CD4-positive, alpha-beta memory T cell (primary cell): ENCODE measurements at regions of chr6 and their contacts with region 1.

Region 1: DNA sequence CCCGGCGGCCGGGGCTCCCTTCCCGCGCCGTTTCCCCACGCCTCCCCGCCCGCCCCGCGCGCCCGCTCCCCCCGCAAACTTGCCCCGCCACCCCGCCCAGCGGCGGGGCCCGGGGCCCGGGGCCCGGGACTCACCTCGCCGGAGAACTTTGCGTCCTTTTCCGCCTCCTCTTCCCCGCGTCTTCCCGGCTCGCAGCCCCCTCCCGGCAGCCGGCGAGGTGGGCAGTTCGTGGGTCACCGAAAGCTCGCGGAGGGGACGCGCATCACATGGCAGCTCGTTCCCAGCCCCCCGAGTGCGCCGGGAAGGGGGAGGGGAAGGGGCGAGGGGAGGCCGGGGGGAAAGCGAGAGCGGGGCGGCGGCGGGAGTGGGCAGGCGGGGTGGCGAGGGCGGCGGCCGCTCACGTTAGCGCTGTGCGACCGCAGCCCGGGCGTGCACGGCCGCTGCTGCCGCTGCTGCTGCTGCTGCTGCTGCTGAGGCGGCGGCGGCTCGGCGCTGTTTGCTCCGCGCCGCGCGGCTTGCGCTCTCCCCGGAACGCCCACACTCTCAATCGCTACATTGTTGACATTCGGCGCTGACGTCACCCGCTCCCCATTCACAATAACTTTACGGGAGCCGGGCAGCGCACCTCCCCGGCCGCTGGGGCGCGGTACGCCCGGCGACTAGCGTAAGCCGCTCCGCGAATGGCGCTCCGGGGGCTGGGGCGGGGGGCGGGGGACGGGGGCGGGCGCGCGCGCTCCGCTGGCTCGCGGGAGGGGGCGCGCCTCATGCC is at the start of gene BACH2:
- DNase-seq: peak; percentile 90 to 96 (median 92)
- H3K4me3 ChIP-seq: peak within 1 kb of the TSS; percentile 43 to 81
- H3K4me3 Mint-ChIP-seq: peak within 1 kb of the TSS; percentile 90 to 96 (median 93)
- H3K27ac ChIP-seq: peak within 1 kb of the TSS; percentile 65
- H3K27ac Mint-ChIP-seq: peak within 1 kb of the TSS; percentile 92 to 99 (median 97)
- H3K4me1 ChIP-seq: peaks cover 40% of the 10 kb centered on the region
- H3K4me1 Mint-ChIP-seq: peaks cover 14 to 40% (median 24%) of the 10 kb centered on the region in 4 donors
- H3K27me3 ChIP-seq: no peaks in the 10 kb centered on the region
- H3K27me3 Mint-ChIP-seq: peaks cover 0 to 4% of the 10 kb centered on the region in 2 donors
- total RNA-seq, gene BACH2: 44.4 to 48.0 TPM

Region 2: DNA sequence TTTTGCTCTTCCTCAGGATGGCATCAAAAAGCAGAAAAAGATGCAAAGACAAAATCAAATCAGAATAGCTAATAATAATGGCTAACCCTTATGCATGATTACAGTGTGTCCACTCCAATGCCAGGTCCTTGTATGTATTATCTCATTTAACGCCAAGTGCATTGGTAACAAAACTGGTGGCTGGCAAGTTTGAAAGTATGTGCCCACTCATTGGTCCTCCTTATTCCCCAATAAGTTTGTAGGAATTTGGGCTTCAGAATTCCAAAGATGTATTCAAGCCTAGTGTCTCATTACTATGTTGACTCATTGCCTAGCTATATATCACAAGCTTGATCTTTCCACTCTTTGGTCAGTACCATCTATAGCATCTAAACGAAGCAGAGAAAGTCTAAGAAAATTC is 205.7 kb before region 1 on chr6:
- CTCF ChIA-PET with region 1: no interaction called
- POLR2A ChIA-PET with region 1: no interaction called
- intact Hi-C with region 1: no loop called
- DNase-seq: no peak
- H3K4me3 ChIP-seq: no peak overlapping the region
- H3K4me3 Mint-ChIP-seq: no peak overlapping the region
- H3K27ac ChIP-seq: no peak overlapping the region
- H3K27ac Mint-ChIP-seq: no peak overlapping the region
- H3K4me1 ChIP-seq: peaks cover 11% of the 10 kb centered on the region
- H3K4me1 Mint-ChIP-seq: peaks cover 12 to 38% (median 21%) of the 10 kb centered on the region in 4 donors
- H3K27me3 ChIP-seq: no peaks in the 10 kb centered on the region
- H3K27me3 Mint-ChIP-seq: no peaks in the 10 kb centered on the region

Region 3: DNA sequence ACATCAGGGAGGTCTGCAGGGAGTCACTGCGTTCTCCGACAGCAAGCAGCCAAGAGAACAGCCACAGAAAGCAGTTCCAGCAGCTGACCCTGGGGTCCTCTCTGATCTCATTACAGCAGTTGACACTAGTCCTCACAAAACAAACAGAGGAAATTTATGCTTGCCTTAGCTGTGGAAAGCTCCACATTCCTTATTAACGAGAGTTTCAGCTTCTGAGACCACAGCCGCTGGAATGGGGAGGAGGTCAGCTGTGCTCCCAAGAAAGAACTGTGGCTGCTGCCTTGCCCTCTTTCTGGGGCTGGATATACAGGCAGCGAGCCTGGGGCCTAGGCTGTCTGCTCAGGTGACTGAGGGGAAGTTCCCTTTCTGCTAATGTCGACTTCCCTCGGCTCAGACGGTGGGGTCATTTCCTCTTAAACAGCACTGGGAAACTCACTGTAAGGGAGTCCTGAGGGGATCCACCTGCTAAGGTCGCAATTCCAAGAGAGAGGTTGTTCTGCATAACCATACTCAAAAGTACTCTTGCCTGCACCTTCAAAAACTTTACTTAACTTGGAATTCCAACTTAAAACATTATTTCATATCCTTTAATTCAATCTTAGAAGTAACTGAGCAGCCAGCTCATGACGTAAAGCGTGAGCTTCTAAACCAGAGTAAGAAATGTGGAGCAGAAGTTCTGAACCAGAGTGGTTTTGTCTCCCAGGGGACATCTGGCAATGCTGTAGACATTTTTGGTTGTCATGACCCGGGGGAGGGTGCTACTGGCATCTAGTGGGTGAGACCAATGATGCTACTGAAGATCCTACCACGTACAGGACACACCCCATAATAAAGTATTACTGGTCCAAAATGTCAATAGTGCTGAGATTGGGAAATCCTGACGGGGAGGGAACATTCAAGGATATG is 80.2 kb before region 1 on chr6:
- CTCF ChIA-PET with region 1: interaction called, 4 read pairs
- POLR2A ChIA-PET with region 1: interaction called, 4 read pairs
- intact Hi-C with region 1: loop called (anchors 1 kb)
- DNase-seq: peak in 4 of 5 donors; percentile 11 to 73 (median 31)
- H3K4me3 ChIP-seq: no peak overlapping the region
- H3K4me3 Mint-ChIP-seq: peak overlapping the region in 5 of 8 donors; percentile 6 to 61 (median 35)
- H3K27ac ChIP-seq: peak overlapping the region; percentile 43
- H3K27ac Mint-ChIP-seq: peak overlapping the region in 3 of 7 donors; percentile 84 to 89 (median 86)
- H3K4me1 ChIP-seq: peaks cover 59% of the 10 kb centered on the region
- H3K4me1 Mint-ChIP-seq: peaks cover 27 to 30% (median 28%) of the 10 kb centered on the region in 4 donors
- H3K27me3 ChIP-seq: no peaks in the 10 kb centered on the region
- H3K27me3 Mint-ChIP-seq: no peaks in the 10 kb centered on the region

Region 4: GRCh38 chr6:90285611-90286381 is 10.7 kb before region 1 on chr6:
- CTCF ChIA-PET with region 1: interaction called, 16 read pairs
- POLR2A ChIA-PET with region 1: interaction called, 79 read pairs
- intact Hi-C with region 1: loop called (anchors 1 kb)
- DNase-seq: peak; percentile 68 to 83 (median 76)
- H3K4me3 ChIP-seq: peak overlapping the region; percentile 1 to 58
- H3K4me3 Mint-ChIP-seq: peak overlapping the region; percentile 80 to 95 (median 86)
- H3K27ac ChIP-seq: peak overlapping the region; percentile 46
- H3K27ac Mint-ChIP-seq: peak overlapping the region; percentile 77 to 98 (median 89)
- H3K4me1 ChIP-seq: peaks cover 32% of the 10 kb centered on the region
- H3K4me1 Mint-ChIP-seq: peaks cover 47 to 89% (median 68%) of the 10 kb centered on the region in 4 donors
- H3K27me3 ChIP-seq: no peaks in the 10 kb centered on the region
- H3K27me3 Mint-ChIP-seq: peaks cover 0 to 2% of the 10 kb centered on the region in 2 donors

Region 5: DNA sequence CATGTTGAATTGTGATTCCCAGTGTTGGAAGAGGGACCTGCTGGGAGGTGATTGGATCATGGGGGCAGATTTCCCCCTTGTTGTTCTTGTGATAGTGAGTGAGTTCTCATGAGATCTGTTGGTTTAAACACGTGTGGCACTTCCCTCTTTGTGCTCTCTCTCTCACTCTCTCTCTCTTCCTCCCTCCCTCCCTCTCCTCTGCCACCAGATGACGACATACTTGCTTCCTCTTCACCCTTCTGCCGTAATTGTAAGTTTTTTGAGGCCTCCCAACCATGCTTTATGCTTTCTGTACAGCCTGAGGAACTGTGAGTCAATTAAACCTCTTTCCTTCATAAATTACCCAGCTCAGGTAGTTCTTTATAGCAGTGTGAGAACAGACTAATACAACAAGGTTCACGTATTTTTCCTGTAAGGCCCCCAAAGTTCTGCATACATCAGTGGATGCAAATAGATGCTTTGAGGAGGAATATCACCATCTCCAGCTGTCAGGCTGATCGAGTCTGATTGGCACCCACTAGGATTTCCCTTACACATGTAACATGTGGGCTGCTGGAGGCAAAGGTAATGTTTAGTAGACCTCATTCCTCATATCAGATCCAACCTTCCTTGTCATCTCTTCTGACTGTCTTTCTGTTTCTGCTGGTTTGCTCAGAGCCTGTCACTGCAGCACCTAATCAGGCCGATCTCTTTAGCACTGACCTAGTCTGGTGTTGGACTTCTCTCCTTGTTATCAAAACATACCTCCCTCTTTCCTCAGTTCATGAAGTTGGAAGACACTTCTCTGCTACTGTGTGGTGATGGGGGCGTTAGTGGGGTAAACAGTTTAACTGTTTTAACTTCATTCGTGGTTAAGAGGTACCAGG is 54.4 kb after region 1 on chr6:
- CTCF ChIA-PET with region 1: no interaction called
- POLR2A ChIA-PET with region 1: no interaction called
- intact Hi-C with region 1: loop called (anchors 5 kb)
- DNase-seq: peak; percentile 61 to 79 (median 72)
- H3K4me3 ChIP-seq: no peak overlapping the region
- H3K4me3 Mint-ChIP-seq: peak overlapping the region in 5 of 8 donors; percentile 8 to 41 (median 38)
- H3K27ac ChIP-seq: no peak overlapping the region
- H3K27ac Mint-ChIP-seq: peak overlapping the region; percentile 37 to 93 (median 81)
- H3K4me1 ChIP-seq: peaks cover 10% of the 10 kb centered on the region
- H3K4me1 Mint-ChIP-seq: peaks cover 7 to 20% (median 15%) of the 10 kb centered on the region in 4 donors
- H3K27me3 ChIP-seq: no peaks in the 10 kb centered on the region
- H3K27me3 Mint-ChIP-seq: peaks cover 9% of the 10 kb centered on the region in 2 donors

Region 6: GRCh38 chr6:90472744-90473143 is 176.2 kb after region 1 on chr6:
- CTCF ChIA-PET with region 1: interaction called, 20 read pairs
- POLR2A ChIA-PET with region 1: interaction called, 15 read pairs
- intact Hi-C with region 1: no loop called
- DNase-seq: peak in 4 of 5 donors; percentile 25 to 44 (median 36)
- H3K4me3 ChIP-seq: no peak overlapping the region
- H3K4me3 Mint-ChIP-seq: peak overlapping the region; percentile 63 to 87 (median 78)
- H3K27ac ChIP-seq: no peak overlapping the region
- H3K27ac Mint-ChIP-seq: peak overlapping the region in 6 of 7 donors; percentile 11 to 79 (median 76)
- H3K4me1 ChIP-seq: peaks cover 43% of the 10 kb centered on the region
- H3K4me1 Mint-ChIP-seq: peaks cover 28 to 66% (median 36%) of the 10 kb centered on the region in 4 donors
- H3K27me3 ChIP-seq: no peaks in the 10 kb centered on the region
- H3K27me3 Mint-ChIP-seq: no peaks in the 10 kb centered on the region

Region 7: DNA sequence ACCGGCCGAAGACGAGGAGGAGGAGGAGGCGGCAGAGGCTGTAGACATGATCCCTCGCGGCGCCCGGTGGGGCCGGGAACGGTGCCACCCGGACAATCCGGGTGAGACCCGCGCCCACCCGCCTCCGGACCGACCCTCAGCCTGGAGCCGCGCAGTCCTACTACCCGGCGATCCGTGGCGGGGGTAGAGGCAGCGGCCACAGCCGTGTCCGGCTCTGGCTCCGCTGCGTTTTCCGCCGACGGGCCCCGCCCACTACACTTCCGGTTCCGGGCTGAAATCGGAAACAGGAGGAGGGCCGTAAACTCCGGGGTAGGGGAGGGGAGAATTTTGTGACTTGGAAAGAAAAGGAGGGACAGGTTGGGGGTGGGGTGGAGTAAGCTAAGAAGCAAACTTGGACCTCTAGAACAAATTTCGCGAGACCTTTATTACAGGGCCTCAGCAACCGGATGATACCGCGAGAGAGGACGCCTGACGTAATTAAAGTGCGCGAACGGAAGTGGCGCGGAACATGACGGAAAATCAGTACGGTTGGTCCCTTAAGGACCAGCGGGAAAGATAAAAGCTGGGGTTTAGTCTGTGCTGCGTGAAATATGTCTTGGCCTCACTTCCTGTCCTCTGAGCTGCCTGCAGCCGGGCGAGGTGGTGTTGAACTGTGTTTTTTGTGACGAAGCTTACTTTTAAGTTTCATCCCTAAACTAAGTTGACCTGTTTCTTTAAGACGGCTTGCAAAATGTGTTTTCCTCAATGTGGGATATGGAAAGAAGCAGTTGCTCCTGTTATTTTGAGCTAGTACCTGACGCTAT is 290.5 kb after region 1 on chr6 and contains the start of gene MAP3K7:
- CTCF ChIA-PET with region 1: no interaction called
- POLR2A ChIA-PET with region 1: interaction called, 3 read pairs
- intact Hi-C with region 1: loop called (anchors 5 kb)
- DNase-seq: peak; percentile 93 to 94 (median 94)
- H3K4me3 ChIP-seq: peak within 1 kb of the TSS; percentile 80 to 82
- H3K4me3 Mint-ChIP-seq: peak within 1 kb of the TSS; percentile 95 to 98 (median 97)
- H3K27ac ChIP-seq: peak within 1 kb of the TSS; percentile 97
- H3K27ac Mint-ChIP-seq: peak within 1 kb of the TSS; percentile 97 to 100 (median 99)
- H3K4me1 ChIP-seq: peaks cover 38% of the 10 kb centered on the region
- H3K4me1 Mint-ChIP-seq: peaks cover 29 to 43% (median 36%) of the 10 kb centered on the region in 4 donors
- H3K27me3 ChIP-seq: no peaks in the 10 kb centered on the region
- H3K27me3 Mint-ChIP-seq: peaks cover 2 to 12% of the 10 kb centered on the region in 2 donors
- total RNA-seq, gene MAP3K7: 33.6 to 34.1 TPM

Region 8: DNA sequence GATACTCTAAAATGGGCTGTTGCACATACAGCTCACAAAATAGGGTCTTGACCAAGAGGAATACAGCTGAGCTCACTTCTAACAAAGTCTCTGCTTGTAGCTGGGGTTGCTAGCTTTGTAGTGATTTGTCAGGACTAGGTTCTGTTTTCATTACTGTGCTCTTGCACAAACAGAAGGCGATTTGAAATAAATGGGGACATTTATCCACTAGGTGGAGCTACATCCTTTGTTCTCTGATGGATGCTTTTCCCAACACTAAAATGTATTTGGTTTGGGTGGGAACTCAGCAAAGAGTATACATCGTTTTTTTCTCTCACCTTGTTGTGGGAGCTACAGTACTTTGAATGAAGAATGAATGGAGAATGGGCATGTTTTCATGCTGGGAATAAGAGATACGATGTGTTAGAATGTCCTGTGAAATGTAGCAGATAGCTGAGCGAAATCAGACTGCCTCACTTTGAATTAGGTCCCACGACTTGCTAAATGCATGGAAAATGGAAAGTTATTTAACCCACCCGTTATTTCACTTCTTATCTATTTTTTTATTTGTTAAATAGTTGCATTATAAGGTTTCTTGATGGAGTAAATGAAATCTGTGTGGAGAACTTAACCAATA is 785.0 kb after region 1 on chr6:
- CTCF ChIA-PET with region 1: no interaction called
- POLR2A ChIA-PET with region 1: no interaction called
- intact Hi-C with region 1: no loop called
- DNase-seq: peak in 1 of 5 donors; percentile 7
- H3K4me3 ChIP-seq: no peak overlapping the region
- H3K4me3 Mint-ChIP-seq: no peak overlapping the region
- H3K27ac ChIP-seq: no peak overlapping the region
- H3K27ac Mint-ChIP-seq: peak overlapping the region in 1 of 7 donors; percentile 11
- H3K4me1 ChIP-seq: no peaks in the 10 kb centered on the region
- H3K4me1 Mint-ChIP-seq: peaks cover 0 to 1% (median 0%) of the 10 kb centered on the region in 4 donors
- H3K27me3 ChIP-seq: no peaks in the 10 kb centered on the region
- H3K27me3 Mint-ChIP-seq: no peaks in the 10 kb centered on the region

Region 9: GRCh38 chr6:92024110-92024509 is 1727.6 kb after region 1 on chr6:
- CTCF ChIA-PET with region 1: no interaction called
- POLR2A ChIA-PET with region 1: no interaction called
- intact Hi-C with region 1: no loop called
- DNase-seq: no peak
- H3K4me3 ChIP-seq: no peak overlapping the region
- H3K4me3 Mint-ChIP-seq: no peak overlapping the region
- H3K27ac ChIP-seq: no peak overlapping the region
- H3K27ac Mint-ChIP-seq: no peak overlapping the region
- H3K4me1 ChIP-seq: no peaks in the 10 kb centered on the region
- H3K4me1 Mint-ChIP-seq: no peaks in the 10 kb centered on the region
- H3K27me3 ChIP-seq: no peaks in the 10 kb centered on the region
- H3K27me3 Mint-ChIP-seq: no peaks in the 10 kb centered on the region